ENCODE measurements at regions of chr5 and their contacts with region 1.

Region 1: GRCh38 chr5:159987031-159987674 is 21.8 kb upstream of the TTC1 start:
- DNase-seq: peak; percentile 82
- H3K4me3 Mint-ChIP-seq: peak overlapping the region; percentile 45
- H3K27ac Mint-ChIP-seq: no peak overlapping the region
- H3K4me1 Mint-ChIP-seq: peaks cover 3% of the 10 kb centered on the region
- H3K27me3 Mint-ChIP-seq: peaks cover 18% of the 10 kb centered on the region

Region 2: DNA sequence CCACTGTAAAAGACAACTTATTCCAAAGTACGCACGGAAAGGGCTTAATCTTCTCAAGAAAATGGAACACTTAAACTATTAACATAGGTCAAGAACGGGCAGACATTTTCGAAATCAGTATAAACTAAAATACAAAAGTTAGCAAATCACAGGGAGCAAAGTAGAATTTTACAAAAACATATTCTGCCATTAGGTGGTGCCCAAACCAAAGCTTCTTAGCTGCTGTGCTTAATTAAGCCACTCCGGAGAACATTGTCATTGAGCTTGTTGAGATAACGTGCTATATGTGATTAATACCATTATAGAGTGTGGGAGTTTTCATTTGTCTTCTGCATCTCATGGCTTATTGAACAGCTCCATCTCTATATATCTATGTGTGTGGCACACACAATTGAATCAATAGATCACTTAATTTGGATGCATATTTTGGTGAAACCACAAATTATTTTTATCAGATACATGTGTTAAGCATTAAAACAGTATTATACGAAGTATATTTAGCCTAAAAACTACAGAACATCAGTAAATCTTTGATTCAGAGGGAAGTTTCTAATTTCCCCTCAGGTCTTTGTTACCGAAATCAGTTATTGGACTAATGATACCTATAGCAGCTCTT is 700.6 kb before region 1 on chr5:
- CTCF ChIA-PET with region 1: interaction called, 15 read pairs
- POLR2A ChIA-PET with region 1: no interaction called
- intact Hi-C with region 1: loop called (anchors 1 kb)
- DNase-seq: no peak
- H3K4me3 Mint-ChIP-seq: no peak overlapping the region
- H3K27ac Mint-ChIP-seq: no peak overlapping the region
- H3K4me1 Mint-ChIP-seq: no peaks in the 10 kb centered on the region
- H3K27me3 Mint-ChIP-seq: no peaks in the 10 kb centered on the region

Region 3: DNA sequence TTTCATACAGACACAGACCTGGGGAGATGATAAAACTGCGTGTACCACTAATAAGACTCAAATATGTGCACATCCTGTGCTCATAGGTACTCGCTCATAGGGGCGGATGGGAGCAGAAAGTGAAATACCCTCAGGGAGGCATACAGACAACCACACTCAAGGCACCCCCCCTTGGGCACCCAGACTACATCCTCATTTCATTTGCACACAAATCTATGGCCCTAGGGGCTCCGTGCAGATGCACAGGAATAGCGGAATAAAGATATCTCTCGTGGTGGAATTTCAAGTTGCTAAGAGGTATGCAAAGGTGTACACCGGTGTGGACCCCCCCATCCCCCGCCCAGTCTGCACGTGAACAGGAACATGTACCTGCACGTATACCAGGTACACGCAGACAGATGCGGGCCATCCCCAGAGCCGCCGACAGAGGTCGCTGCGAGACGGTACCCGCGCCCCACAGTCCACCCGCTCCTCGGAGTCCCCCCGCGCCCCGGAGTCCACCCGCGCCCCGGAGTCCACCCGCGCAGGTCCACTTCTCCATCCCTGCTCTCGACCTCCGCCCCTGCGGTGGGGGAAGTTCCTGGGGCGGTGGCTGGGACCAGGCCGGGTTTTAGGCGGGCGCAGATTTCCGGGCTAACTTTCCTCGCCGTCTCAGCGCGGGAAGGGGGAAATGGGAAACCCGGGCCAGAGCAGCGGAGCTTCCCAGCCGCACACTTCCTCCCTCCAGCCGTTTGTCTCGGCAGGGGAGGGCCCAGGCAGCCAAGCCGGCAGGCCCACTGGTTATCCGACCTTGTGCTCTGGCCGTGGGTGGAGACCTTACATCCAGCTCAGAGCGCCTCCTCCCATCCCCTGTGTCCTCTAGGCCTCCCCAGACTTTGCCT is 655.8 kb before region 1 on chr5:
- CTCF ChIA-PET with region 1: interaction called, 7 read pairs
- POLR2A ChIA-PET with region 1: no interaction called
- intact Hi-C with region 1: loop called (anchors 2 kb)
- DNase-seq: peak; percentile 84
- H3K4me3 Mint-ChIP-seq: peak overlapping the region; percentile 61
- H3K27ac Mint-ChIP-seq: no peak overlapping the region
- H3K4me1 Mint-ChIP-seq: peaks cover 16% of the 10 kb centered on the region
- H3K27me3 Mint-ChIP-seq: no peaks in the 10 kb centered on the region

Region 4: GRCh38 chr5:159393854-159394274 is 593.3 kb before region 1 on chr5:
- CTCF ChIA-PET with region 1: no interaction called
- POLR2A ChIA-PET with region 1: no interaction called
- intact Hi-C with region 1: no loop called
- DNase-seq: no peak
- H3K4me3 Mint-ChIP-seq: no peak overlapping the region
- H3K27ac Mint-ChIP-seq: no peak overlapping the region
- H3K4me1 Mint-ChIP-seq: no peaks in the 10 kb centered on the region
- H3K27me3 Mint-ChIP-seq: no peaks in the 10 kb centered on the region

Region 5: GRCh38 chr5:159444441-159445082 is 542.6 kb before region 1 on chr5:
- CTCF ChIA-PET with region 1: interaction called, 60 read pairs
- POLR2A ChIA-PET with region 1: no interaction called
- intact Hi-C with region 1: loop called (anchors 1 kb)
- DNase-seq: no peak
- H3K4me3 Mint-ChIP-seq: no peak overlapping the region
- H3K27ac Mint-ChIP-seq: no peak overlapping the region
- H3K4me1 Mint-ChIP-seq: no peaks in the 10 kb centered on the region
- H3K27me3 Mint-ChIP-seq: peaks cover 6% of the 10 kb centered on the region

Region 6: DNA sequence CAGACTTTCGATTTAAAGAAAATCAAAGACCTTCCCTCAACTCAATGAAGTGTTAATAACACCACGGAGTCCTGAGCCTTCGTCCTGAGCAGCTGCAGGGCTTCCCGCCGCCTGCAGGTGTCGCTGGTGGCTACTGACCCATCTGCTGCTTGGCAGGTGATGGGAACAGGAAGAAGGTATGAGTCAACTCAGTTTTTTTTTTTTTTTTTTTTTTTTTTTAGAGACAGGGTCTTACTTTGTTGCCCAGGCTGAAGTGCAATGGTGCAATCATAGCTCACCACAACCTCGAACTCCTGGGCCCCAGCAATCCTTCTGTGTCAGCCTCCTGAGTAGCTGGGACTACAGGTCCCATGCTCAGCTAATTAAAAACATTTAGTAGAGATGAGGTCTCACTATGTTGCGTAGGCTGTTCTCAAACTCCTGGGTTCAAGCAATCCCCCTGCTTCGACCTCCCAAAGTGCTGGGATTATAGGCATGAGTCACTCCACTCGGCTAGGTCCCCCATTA is 471.2 kb before region 1 on chr5:
- CTCF ChIA-PET with region 1: interaction called, 9 read pairs
- POLR2A ChIA-PET with region 1: no interaction called
- intact Hi-C with region 1: loop called (anchors 1 kb)
- DNase-seq: peak; percentile 87
- H3K4me3 Mint-ChIP-seq: no peak overlapping the region
- H3K27ac Mint-ChIP-seq: no peak overlapping the region
- H3K4me1 Mint-ChIP-seq: peaks cover 9% of the 10 kb centered on the region
- H3K27me3 Mint-ChIP-seq: peaks cover 2% of the 10 kb centered on the region

Region 7: DNA sequence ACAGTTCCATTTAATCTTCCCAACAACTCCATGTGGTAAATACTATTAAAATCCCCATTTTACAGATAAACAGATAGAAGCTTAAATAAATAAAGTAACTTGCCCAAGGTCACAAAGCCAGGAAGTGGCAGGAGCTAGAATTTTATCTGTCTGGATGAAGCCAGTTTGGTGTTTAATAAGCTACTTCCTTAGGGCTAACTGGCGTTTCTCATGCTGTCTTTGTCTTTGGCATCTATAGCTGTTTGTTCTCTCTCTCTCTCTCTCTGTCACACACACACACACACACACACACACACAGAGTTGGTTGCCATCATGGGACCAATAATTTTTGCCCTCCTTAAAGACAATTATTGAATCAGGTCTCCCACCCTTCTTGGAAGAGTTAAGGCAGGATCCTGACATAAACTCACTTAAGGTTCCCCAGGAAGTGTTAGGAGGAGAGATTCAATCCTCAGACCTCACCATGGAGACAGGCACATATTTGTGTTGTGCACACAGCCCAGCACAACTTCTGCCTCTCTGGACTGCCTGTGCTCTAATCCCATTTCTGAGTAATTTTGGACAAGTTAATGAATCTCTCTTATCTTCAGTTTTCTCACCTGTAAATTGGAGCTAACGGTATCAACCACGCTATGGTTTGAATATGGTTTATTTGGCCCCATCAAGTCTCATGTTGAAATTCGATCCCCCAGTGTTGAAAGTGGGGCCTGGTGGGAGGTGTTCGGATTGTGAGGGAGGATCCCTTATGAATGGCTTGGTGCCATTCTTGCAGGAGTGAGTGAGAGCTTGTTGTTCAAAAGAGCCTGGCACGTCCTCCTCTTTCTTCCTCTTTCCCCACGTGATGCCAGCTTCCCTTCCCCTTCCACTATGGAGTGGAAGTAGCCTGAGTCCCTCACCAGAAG is 79.2 kb before region 1 on chr5:
- CTCF ChIA-PET with region 1: no interaction called
- POLR2A ChIA-PET with region 1: no interaction called
- intact Hi-C with region 1: no loop called
- DNase-seq: no peak
- H3K4me3 Mint-ChIP-seq: no peak overlapping the region
- H3K27ac Mint-ChIP-seq: no peak overlapping the region
- H3K4me1 Mint-ChIP-seq: no peaks in the 10 kb centered on the region
- H3K27me3 Mint-ChIP-seq: peaks cover 24% of the 10 kb centered on the region

Region 8: DNA sequence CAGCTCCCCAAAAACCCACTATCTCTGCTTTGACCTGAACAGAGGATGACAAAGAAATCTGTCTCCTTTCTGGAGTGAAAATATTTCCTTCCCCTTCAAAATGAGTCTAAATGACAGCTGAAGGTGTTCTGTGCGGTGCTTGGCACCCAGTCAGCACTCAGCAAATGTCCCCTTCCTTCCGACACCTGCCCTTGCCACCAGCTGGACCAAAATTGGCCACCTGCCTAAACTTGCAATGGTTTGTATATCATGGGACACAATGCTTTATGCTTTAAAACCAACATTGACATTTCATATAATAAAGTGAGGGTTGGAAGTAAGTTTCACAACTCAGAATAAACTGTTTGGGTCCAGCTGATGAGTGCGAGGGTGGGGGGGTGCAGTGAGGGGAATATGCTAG is 14.3 kb after region 1 on chr5:
- CTCF ChIA-PET with region 1: interaction called, 14 read pairs
- POLR2A ChIA-PET with region 1: no interaction called
- intact Hi-C with region 1: no loop called
- DNase-seq: no peak
- H3K4me3 Mint-ChIP-seq: no peak overlapping the region
- H3K27ac Mint-ChIP-seq: no peak overlapping the region
- H3K4me1 Mint-ChIP-seq: no peaks in the 10 kb centered on the region
- H3K27me3 Mint-ChIP-seq: peaks cover 9% of the 10 kb centered on the region

Region 9: DNA sequence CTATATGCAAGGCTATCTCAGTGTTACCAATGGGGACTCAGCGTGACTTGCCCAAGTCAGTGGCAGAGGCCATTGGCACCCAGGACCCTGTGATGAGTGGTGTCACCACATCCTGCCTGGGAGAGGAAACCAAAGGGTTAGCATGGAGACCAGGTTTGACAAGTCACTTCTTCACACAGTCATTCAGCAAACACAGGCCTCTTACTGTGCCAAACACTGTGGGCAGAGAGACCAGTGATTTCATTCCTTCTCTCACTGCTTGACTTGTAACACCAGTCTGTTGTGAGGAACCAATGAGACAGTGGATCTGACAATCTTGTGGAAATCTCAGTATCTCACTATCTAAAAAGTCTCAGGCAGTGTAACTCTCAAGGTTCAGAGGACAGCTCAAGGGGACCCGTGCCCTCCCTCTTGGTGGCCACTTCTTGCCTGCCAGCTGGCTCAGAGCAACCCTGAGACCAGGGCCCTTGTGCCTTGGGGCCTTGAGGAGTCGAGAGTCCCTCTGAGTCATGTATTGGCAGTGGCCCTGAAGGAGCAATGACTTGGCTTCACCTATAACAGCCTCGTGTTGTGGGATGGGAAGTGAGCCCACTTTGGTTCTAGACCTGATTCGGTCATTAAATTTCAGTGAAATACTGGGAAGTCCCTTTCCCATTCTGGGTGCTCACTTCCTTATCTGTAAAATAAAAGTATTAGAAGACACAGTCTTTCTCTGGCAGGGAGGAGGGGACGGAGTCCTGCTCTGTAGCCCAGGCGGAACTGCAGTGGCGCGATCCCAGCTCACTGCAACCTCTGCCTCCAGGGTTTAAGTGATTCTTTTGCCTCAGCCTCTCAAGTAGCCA is 243.8 kb after region 1 on chr5:
- CTCF ChIA-PET with region 1: no interaction called
- POLR2A ChIA-PET with region 1: no interaction called
- intact Hi-C with region 1: no loop called
- DNase-seq: peak; percentile 44
- H3K4me3 Mint-ChIP-seq: no peak overlapping the region
- H3K27ac Mint-ChIP-seq: no peak overlapping the region
- H3K4me1 Mint-ChIP-seq: no peaks in the 10 kb centered on the region
- H3K27me3 Mint-ChIP-seq: no peaks in the 10 kb centered on the region